Common myeloid progenitor, CD34-positive (primary cell): ENCODE measurements at regions of chr11 and their contacts with region 1.

Region 1: GRCh38 chr11:15159085-15159484 is 44.4 kb downstream of the INSC start:
- DNase-seq: peak; percentile 15 to 38 (median 19)
- H3K4me3 ChIP-seq: no peak overlapping the region
- H3K27ac ChIP-seq: no peak overlapping the region
- H3K4me1 ChIP-seq: no peaks in the 10 kb centered on the region
- H3K27me3 ChIP-seq: peaks cover 0 to 2% (median 0%) of the 10 kb centered on the region in 5 experiments

Region 2: DNA sequence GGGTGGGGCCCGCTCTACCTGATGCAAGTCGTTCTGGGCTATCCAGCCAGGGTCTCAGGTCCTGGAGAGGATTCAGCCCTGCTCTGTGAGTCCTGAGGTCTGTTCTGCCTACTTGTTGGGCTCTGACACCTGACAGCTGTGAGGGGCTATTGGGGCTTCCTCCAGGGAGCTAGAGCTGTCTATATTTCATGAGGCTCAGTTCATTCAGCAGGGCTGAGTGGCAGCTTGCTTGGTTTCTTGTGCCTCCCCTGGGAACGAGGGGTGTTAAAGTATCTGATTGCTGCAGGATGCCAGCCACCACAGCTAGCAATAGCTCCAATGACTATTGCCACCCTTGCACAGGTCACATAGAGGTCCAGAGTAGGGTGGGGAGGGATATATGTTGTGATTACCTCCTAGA is 17.7 kb before region 1 on chr11:
- CTCF ChIA-PET with region 1: interaction called, 12 read pairs
- POLR2A ChIA-PET with region 1: no interaction called
- DNase-seq: no peak
- H3K4me3 ChIP-seq: no peak overlapping the region
- H3K27ac ChIP-seq: no peak overlapping the region
- H3K4me1 ChIP-seq: peaks cover 0 to 8% (median 4%) of the 10 kb centered on the region in 4 experiments
- H3K27me3 ChIP-seq: no peaks in the 10 kb centered on the region